Panc1 (cell line): ENCODE measurements at regions of chr11 and their contacts with region 1.

Region 1: DNA sequence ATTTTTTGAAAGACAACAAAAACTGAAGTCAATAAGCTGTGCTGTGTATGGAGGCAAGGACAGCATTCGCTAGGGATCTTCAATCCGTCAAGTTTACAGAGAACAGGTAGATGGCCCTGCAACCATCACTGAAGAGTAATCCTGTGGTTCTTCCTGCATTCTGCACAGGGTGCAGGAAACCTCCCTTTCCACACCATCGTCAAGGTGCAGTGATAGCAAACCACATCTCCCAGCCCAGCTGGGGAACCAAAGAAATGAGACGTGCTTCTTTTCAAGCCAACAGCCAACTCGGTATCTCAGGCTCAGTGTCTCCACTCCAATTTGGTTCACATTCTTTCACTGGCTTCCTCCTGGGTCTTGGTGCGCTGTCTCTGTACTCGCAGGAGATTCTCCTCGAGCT is 814.5 kb downstream of the OPCML start:
- DNase-seq: no peak
- ATAC-seq: no peak
- H3K4me3 ChIP-seq: no peak overlapping the region
- H3K27ac ChIP-seq: no peak overlapping the region
- H3K4me1 ChIP-seq: no peaks in the 10 kb centered on the region
- H3K27me3 ChIP-seq: no peaks in the 10 kb centered on the region
- CTCF ChIP-seq: no peak

Region 2: GRCh38 chr11:132496341-132496740 is 221.5 kb before region 1 on chr11:
- CTCF ChIA-PET with region 1: no interaction called
- POLR2A ChIA-PET with region 1: interaction called, 10 read pairs
- in situ Hi-C with region 1: no loop called
- intact Hi-C with region 1: no loop called
- DNase-seq: no peak
- ATAC-seq: no peak
- H3K4me3 ChIP-seq: no peak overlapping the region
- H3K27ac ChIP-seq: no peak overlapping the region
- H3K4me1 ChIP-seq: no peaks in the 10 kb centered on the region
- H3K27me3 ChIP-seq: no peaks in the 10 kb centered on the region
- CTCF ChIP-seq: no peak

Region 3: DNA sequence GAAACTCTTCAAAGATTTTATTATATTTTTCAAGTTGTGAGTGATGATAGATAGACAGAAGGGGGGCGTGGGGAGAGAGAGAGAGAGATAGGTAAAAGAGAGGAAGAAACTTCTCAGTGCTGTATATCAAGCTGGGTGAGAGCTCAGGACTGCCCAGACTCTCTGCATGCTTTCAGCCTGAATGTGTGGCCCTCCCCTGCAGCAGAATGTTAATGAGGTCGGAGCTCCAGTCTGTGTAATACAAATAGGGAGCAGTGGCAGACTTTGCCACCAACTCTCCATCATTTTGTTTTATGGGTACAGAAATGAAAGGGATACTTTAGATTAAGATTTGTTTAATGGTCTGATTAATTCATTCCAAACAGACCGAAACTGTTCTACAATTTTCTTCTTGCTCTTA is 61.7 kb after region 1 on chr11:
- CTCF ChIA-PET with region 1: no interaction called
- POLR2A ChIA-PET with region 1: no interaction called
- in situ Hi-C with region 1: no loop called
- intact Hi-C with region 1: no loop called
- DNase-seq: no peak
- ATAC-seq: no peak
- H3K4me3 ChIP-seq: no peak overlapping the region
- H3K27ac ChIP-seq: no peak overlapping the region
- H3K4me1 ChIP-seq: no peaks in the 10 kb centered on the region
- H3K27me3 ChIP-seq: no peaks in the 10 kb centered on the region
- CTCF ChIP-seq: no peak